Psoas muscle (tissue), 8 donors: ENCODE measurements at regions of chr10 and their contacts with region 1.

Region 1: GRCh38 chr10:102729029-102730026 is 14.4 kb upstream of the WBP1L start:
- DNase-seq: peak; percentile 90 to 94
- ATAC-seq: peak; percentile 96 to 99 (median 97)
- H3K4me3 ChIP-seq: no peak overlapping the region
- H3K27ac ChIP-seq: no peak overlapping the region
- H3K4me1 ChIP-seq: no peaks in the 10 kb centered on the region
- H3K27me3 ChIP-seq: no peaks in the 10 kb centered on the region
- CTCF ChIP-seq: peak; percentile 92

Region 2: DNA sequence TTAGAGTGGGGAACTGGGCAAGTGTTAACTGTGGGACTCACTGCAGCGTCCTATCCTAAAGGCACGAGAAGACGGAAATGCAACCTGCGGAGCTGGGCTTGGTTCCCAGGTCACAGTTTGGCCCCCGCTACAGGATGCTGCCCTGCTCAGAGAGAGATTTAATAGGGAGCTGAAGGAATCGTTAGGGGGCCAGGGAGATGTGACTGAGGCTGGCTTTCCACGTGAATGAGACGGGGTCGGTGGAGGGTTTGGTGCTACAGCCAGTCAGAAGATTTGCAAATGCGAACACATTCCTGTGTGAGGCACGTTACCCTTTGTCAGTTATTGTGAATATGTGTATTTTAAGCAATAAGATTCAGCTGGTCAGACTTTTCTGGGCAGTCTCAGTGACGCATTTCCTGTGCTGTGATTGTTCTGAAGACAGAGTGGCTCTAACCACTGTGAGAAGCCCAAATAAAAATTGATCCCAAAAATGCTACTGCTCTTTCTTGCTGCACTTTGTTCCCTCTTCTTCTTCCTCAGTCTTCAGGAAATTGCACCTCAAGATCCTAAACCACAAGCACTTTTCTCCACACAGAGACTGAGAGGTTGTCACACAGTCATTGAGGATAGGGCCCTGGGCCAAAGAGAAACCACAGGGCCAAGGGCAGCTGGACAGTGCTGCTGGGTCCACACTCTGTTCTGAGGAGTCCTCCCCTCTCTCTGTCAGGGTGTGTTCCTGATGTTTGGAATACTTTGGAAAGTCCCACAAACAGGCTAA is 86.6 kb after region 1 on chr10:
- intact Hi-C with region 1: loop called in 1 of 2 experiments (anchors 5 kb)
- DNase-seq: no peak
- ATAC-seq: peak; percentile 33 to 44 (median 38)
- H3K4me3 ChIP-seq: no peak overlapping the region
- H3K27ac ChIP-seq: peak overlapping the region; percentile 89
- H3K4me1 ChIP-seq: peaks cover 42% of the 10 kb centered on the region
- H3K27me3 ChIP-seq: no peaks in the 10 kb centered on the region
- CTCF ChIP-seq: no peak

Region 3: GRCh38 chr10:102850025-102850518 is 120.7 kb after region 1 on chr10:
- intact Hi-C with region 1: no loop called
- DNase-seq: no peak
- ATAC-seq: no peak
- H3K4me3 ChIP-seq: no peak overlapping the region
- H3K27ac ChIP-seq: no peak overlapping the region
- H3K4me1 ChIP-seq: peaks cover 7% of the 10 kb centered on the region
- H3K27me3 ChIP-seq: no peaks in the 10 kb centered on the region
- CTCF ChIP-seq: no peak

Region 4: GRCh38 chr10:102904346-102904745 is 175.0 kb after region 1 on chr10:
- intact Hi-C with region 1: loop called (anchors 2 kb)
- DNase-seq: no peak
- ATAC-seq: no peak
- H3K4me3 ChIP-seq: no peak overlapping the region
- H3K27ac ChIP-seq: no peak overlapping the region
- H3K4me1 ChIP-seq: no peaks in the 10 kb centered on the region
- H3K27me3 ChIP-seq: no peaks in the 10 kb centered on the region
- CTCF ChIP-seq: no peak

Region 5: DNA sequence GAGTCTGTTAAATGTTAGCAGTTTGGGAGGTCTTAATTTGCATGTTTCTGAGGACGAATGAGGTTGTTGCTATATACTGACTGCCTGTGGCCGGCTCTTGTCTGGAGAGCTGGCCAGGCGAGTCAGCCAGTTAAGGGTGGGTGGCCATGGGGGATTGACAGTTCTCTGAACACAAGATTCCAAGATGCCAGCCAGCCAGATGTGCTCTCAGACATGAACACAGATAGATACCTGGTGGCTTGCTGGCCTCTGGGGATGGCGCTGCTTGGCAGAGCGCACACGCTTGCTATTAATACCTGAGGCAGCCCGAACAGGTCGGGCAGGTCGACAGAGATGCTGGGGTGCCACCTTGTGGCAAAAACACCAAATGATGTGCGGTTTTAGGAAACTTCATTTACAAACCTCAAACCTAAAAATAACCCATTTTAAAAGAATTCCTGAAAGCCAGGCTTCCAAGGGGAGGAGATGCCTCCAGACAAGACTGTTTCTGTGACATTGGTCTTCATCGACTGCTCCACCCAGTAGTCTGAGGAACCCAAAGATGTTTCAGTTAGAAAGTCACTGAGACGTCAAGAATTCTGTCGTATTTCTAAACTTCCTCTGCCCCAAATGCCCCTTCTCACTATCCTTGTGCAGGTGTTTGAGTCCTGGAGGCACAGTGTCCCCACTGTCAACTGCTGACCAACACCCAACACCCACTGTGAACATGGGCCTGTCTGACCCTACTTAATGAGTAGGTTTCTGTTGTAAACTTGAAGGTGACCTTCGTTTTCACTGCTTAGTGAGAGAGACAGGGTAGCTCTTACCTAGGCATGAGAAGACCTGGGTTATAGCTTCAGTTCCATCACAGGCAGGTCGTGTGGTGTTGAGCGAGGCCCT is 340.4 kb after region 1 on chr10:
- intact Hi-C with region 1: loop called (anchors 5 to 10 kb)
- DNase-seq: peak; percentile 30 to 65
- ATAC-seq: peak; percentile 74 to 81 (median 78)
- H3K4me3 ChIP-seq: no peak overlapping the region
- H3K27ac ChIP-seq: no peak overlapping the region
- H3K4me1 ChIP-seq: no peaks in the 10 kb centered on the region
- H3K27me3 ChIP-seq: no peaks in the 10 kb centered on the region
- CTCF ChIP-seq: peak; percentile 62